ENCODE measurements at regions of chr9 and their contacts with region 1.

Region 1: DNA sequence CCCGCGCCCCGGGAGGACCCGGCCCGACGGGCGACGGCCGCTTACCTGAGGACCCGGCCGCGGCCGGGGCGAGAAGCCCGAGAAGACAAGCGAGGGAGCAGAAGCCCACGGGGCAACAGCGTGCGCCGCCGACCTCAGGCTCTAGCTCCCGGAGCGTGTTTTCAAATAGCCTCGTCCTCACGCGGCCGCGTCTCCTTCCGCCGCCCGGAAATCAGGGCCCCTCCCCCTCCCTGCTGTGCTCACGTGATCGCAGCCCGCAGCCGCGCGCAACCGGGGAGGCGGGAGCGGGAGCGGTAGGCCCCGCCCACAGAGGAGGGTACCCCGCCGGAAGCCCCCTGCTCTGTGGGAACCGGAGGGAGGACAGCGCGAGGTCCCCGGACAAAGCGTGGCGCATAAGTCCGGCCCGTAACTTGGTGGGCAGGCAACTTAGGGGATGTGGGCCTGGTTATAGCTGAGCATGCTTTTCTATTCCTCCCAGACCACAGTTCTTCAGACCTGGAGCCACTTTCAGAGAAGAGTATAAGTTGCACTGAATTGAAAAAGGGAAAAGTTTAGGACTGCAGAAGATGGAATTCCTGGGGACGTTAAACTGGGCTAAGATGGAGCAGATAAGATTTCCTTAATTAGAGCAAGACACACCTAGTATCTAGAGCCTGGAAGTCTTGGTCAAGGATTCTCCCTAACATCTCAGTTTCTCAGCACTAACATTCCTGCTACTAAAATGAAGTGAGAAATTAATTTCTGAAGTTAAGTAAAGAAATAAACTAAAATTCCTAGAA is at the start of gene TEX10:
- DNase-seq: peak; percentile 89 to 94 (median 90)
- ATAC-seq: peak; percentile 93 to 98 (median 98)
- H3K4me3 ChIP-seq: peak within 1 kb of the TSS; percentile 80 to 99 (median 96)
- H3K27ac ChIP-seq: peak within 1 kb of the TSS; percentile 46 to 90 (median 82)
- H3K4me1 ChIP-seq: peaks cover 0 to 28% (median 12%) of the 10 kb centered on the region in 12 donors
- H3K27me3 ChIP-seq: no peaks in the 10 kb centered on the region
- CTCF ChIP-seq: no peak
- POLR2A ChIP-seq: peak in 1 of 2 donors; percentile 66
- total RNA-seq, gene TEX10: 6.4 to 10.6 (median 9.2) TPM

Region 2: DNA sequence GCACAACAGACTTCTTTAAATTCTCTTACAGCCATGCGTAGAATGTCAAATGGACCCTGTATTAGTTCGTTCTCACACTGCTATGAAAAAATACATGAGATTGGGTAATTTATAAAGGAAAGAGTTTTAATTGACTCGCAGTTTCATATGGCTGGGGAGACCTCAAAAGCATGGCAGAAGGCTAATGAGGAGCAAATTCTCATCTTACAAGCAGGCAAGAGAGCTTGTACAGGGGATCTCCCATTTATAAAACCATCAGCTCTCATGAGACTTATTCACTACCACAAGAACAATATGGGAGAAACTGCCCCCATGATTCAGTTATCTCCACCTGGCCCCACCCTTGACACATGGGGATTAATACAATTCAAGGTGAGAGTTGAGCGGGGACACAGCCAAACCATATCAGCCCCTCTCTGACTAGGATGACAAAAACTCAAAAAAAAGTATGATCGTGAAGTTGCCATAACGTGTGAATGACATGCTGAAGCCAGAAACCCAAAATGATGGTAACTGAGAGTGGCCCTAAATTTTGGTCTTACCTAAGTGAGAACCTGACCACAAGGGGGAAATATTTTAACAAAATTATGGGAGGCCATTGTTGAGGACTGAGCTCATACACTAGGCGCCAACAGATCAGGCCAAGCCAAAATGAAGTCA is 17.3 kb after region 1 on chr9:
- intact Hi-C with region 1: no loop called
- DNase-seq: no peak
- ATAC-seq: no peak
- H3K4me3 ChIP-seq: no peak overlapping the region
- H3K27ac ChIP-seq: no peak overlapping the region
- H3K4me1 ChIP-seq: no peaks in the 10 kb centered on the region
- H3K27me3 ChIP-seq: no peaks in the 10 kb centered on the region
- CTCF ChIP-seq: no peak
- POLR2A ChIP-seq: no peak

Region 3: DNA sequence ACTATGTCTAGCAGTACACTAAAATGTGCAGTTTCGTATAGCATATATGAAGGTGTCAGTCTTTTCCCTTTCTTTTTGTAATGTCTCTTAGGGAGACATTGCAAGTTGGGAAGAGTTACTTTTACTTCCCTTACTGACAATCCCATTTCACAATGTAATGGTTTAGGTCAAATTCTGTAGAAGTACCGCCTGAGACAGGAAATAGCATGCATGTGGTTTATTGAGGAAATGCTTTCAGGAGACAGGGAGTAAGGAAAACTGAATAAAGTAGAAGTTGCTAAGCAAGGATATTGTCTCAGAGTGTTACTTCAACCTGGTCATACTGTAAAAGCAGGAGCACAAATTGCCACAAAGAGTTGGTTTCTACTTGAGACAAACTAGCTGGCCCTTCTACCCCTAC is 41.9 kb after region 1 on chr9:
- intact Hi-C with region 1: no loop called
- DNase-seq: no peak
- ATAC-seq: no peak
- H3K4me3 ChIP-seq: no peak overlapping the region
- H3K27ac ChIP-seq: peak overlapping the region in 1 of 12 donors; percentile 30
- H3K4me1 ChIP-seq: peaks cover 0 to 10% (median 0%) of the 10 kb centered on the region in 12 donors
- H3K27me3 ChIP-seq: no peaks in the 10 kb centered on the region
- CTCF ChIP-seq: no peak
- POLR2A ChIP-seq: no peak

Region 4: DNA sequence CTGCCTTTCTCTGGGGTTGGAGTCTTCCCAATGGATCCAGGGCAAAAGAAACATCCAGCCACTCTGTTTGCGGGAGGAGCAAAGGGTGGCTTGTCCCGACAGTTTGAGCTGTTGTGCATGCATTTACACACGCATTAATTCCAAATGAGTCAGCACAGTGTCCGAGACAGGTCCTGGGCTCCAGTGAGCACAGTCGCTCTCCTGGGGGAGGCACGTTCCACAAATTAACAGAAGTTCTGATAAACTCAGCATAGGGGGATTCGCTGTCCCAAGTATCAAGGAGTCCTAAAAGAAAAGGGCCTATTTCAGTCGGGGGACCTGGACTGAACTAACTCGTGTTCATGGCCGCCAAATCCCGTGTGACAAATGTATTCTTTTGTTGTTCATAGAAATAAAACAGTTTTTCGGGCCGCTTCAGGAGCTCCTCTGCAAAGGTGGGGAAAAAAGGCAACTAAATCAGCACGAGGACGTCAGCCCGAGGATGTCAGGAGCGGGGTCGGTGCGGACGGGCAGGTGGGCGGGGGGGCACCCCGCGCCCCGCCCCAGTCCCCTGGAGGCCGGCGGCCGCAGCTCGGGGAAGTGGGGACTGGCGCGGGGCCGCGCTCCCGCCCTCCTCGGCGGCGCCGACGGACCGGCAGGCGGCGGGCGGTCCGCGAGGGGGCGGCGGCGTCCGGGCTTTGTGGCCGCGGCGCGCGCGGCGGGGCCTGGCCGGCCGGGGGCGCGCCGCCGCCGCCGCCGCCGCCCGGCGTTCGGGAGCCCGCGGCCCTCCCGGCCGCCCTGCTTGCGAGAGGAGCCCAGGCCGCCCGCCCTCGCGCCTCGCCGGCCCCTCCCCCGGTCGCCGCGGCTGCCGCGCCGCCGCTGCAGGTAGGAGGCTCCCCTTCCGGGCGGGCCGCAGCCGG is 73.9 kb after region 1 on chr9 and contains the start of gene MSANTD3:
- intact Hi-C with region 1: loop called in 7 of 10 experiments (anchors 5 to 10 kb)
- DNase-seq: peak; percentile 67 to 85 (median 71)
- ATAC-seq: peak; percentile 65 to 83 (median 81)
- H3K4me3 ChIP-seq: peak within 1 kb of the TSS; percentile 64 to 98 (median 88)
- H3K27ac ChIP-seq: peak within 1 kb of the TSS; percentile 78 to 95 (median 86)
- H3K4me1 ChIP-seq: peaks cover 0 to 33% (median 20%) of the 10 kb centered on the region in 12 donors
- H3K27me3 ChIP-seq: no peaks in the 10 kb centered on the region
- CTCF ChIP-seq: peak in 2 of 12 donors; percentile 29 to 32
- POLR2A ChIP-seq: peak in 1 of 2 donors; percentile 53
- total RNA-seq, gene MSANTD3: 17.8 to 60.5 (median 24.1) TPM

Region 5: DNA sequence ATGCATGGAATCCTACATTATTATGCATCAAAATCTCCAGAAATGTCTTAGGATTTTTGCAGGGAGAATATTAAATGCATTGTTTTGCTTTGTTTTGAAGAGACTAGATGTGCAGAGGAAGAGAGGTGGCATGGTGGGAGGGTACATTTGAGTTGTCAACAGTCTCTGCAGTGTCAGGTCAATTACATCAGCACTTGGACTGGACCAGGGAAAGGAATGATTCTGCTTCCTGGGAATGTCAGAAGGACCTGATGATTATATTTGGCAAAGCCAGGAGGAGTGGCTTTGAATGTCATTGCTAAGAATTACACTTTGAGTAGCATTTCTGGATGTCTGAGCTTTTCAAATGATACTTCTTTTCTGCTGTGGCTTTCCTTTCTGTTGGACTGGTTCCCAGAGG is 102.6 kb after region 1 on chr9:
- intact Hi-C with region 1: no loop called
- DNase-seq: no peak
- ATAC-seq: peak in 1 of 4 donors; percentile 74
- H3K4me3 ChIP-seq: no peak overlapping the region
- H3K27ac ChIP-seq: no peak overlapping the region
- H3K4me1 ChIP-seq: peaks cover 0 to 12% (median 0%) of the 10 kb centered on the region in 12 donors
- H3K27me3 ChIP-seq: no peaks in the 10 kb centered on the region
- CTCF ChIP-seq: no peak
- POLR2A ChIP-seq: no peak